CD8-positive, alpha-beta T cell (primary cell): ENCODE measurements at regions of chrX and their contacts with region 1.

Region 1: GRCh38 chrX:64570204-64570603 is 175.0 kb upstream of the MTMR8 start:
- DNase-seq: no peak
- ATAC-seq: no peak
- H3K4me3 ChIP-seq: no peak overlapping the region
- H3K4me3 Mint-ChIP-seq: no peak overlapping the region
- H3K27ac ChIP-seq: no peak overlapping the region
- H3K27ac Mint-ChIP-seq: no peak overlapping the region
- H3K4me1 ChIP-seq: no peaks in the 10 kb centered on the region
- H3K4me1 Mint-ChIP-seq: no peaks in the 10 kb centered on the region
- H3K27me3 ChIP-seq: no peaks in the 10 kb centered on the region
- H3K27me3 Mint-ChIP-seq: no peaks in the 10 kb centered on the region
- CTCF ChIP-seq: no peak

Region 2: DNA sequence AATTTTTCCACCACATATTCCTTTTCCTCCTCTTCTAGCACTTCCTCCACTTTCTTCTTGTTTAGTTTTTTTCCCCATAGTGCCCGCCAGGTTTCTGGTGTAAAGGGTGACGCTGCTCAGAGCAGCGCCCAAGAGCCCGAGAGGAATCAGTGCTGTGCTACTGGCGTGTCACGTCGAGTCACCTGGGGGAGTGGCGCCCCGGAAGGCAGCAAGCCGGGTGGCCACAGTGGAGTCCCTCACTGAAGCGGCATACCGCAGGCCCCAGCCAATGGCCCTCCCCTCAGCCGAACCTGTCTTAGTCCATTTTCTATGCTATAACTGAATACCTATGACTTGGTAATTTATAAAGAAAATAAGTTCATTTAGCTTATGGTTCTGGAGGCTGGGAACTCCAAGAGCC is 1270.6 kb before region 1 on chrX:
- CTCF ChIA-PET with region 1: no interaction called
- POLR2A ChIA-PET with region 1: no interaction called
- intact Hi-C with region 1: no loop called
- DNase-seq: no peak
- ATAC-seq: no peak
- H3K4me3 ChIP-seq: no peak overlapping the region
- H3K4me3 Mint-ChIP-seq: no peak overlapping the region
- H3K27ac ChIP-seq: no peak overlapping the region
- H3K27ac Mint-ChIP-seq: no peak overlapping the region
- H3K4me1 ChIP-seq: no peaks in the 10 kb centered on the region
- H3K4me1 Mint-ChIP-seq: no peaks in the 10 kb centered on the region
- H3K27me3 ChIP-seq: no peaks in the 10 kb centered on the region
- H3K27me3 Mint-ChIP-seq: no peaks in the 10 kb centered on the region
- CTCF ChIP-seq: no peak

Region 3: DNA sequence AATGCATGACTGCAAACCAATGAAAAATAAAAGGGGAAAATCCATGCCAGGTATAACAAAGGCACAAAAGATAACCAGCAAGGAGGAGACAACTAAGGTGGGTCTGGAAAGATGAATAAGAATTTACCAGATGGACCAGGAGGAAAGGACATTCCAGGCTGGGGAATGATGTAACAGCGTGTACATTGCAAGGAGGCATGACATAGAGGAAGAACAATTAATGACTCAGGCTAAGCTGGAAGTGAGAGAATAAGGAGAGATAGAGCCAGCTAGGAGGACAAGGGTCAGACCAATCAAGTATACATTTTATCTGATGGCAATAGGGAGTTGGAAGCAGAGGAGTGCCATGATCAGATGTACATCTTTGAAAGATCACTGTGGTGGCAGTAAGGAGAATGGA is 231.9 kb before region 1 on chrX:
- CTCF ChIA-PET with region 1: no interaction called
- POLR2A ChIA-PET with region 1: no interaction called
- intact Hi-C with region 1: no loop called
- DNase-seq: no peak
- ATAC-seq: no peak
- H3K4me3 ChIP-seq: no peak overlapping the region
- H3K4me3 Mint-ChIP-seq: no peak overlapping the region
- H3K27ac ChIP-seq: no peak overlapping the region
- H3K27ac Mint-ChIP-seq: no peak overlapping the region
- H3K4me1 ChIP-seq: no peaks in the 10 kb centered on the region
- H3K4me1 Mint-ChIP-seq: no peaks in the 10 kb centered on the region
- H3K27me3 ChIP-seq: no peaks in the 10 kb centered on the region
- H3K27me3 Mint-ChIP-seq: no peaks in the 10 kb centered on the region
- CTCF ChIP-seq: no peak

Region 4: DNA sequence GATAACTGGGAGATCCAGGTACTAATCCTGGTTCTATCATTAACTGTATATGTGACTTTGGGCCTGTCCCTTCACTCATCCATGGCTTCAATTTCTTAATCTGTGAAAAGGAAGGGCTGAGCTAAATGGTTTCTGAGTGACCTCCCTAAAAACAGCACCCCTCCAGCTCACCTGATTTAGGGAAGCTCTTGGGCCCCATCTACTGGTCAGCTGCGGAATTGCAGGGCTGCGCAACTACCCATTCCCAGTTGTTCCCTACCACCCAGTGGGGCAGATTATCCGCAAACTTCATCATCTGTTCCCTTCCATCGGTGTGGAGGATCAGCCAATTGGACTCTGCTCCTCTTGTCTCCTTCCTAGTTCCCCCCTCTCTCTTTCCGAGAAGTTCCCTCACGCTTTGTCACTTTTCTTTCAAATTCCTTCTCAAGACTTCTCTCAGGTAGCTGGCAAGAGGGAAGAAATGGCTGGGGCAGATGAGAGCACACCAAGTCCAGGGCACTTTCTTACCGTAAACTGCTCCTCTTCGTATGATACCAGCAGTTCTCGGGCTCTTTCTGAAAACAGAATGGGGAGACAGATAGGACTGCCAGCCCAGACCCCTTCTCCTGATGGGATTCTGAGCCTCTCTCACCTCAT is 958.6 kb after region 1 on chrX:
- CTCF ChIA-PET with region 1: interaction called, 4 read pairs
- POLR2A ChIA-PET with region 1: no interaction called
- intact Hi-C with region 1: loop called in 1 of 2 experiments (anchors 5 kb)
- DNase-seq: peak; percentile 13 to 76 (median 54)
- ATAC-seq: peak; percentile 78
- H3K4me3 ChIP-seq: no peak overlapping the region
- H3K4me3 Mint-ChIP-seq: no peak overlapping the region
- H3K27ac ChIP-seq: no peak overlapping the region
- H3K27ac Mint-ChIP-seq: no peak overlapping the region
- H3K4me1 ChIP-seq: peaks cover 13% of the 10 kb centered on the region
- H3K4me1 Mint-ChIP-seq: peaks cover 18% of the 10 kb centered on the region
- H3K27me3 ChIP-seq: no peaks in the 10 kb centered on the region
- H3K27me3 Mint-ChIP-seq: no peaks in the 10 kb centered on the region
- CTCF ChIP-seq: peak; percentile 77